ENCODE measurements at regions of chr2 and their contacts with region 1.

Region 1: GRCh38 chr2:198296665-198297308 is 492.4 kb downstream of the PLCL1 start:
- DNase-seq: peak; percentile 31 to 76 (median 43)
- H3K4me3 ChIP-seq: no peak overlapping the region
- H3K27ac ChIP-seq: no peak overlapping the region
- H3K4me1 ChIP-seq: no peaks in the 10 kb centered on the region
- H3K27me3 ChIP-seq: peaks cover 5% of the 10 kb centered on the region
- CTCF ChIP-seq: peak; percentile 67 to 86 (median 78)
- POLR2A ChIP-seq: no peak

Region 2: DNA sequence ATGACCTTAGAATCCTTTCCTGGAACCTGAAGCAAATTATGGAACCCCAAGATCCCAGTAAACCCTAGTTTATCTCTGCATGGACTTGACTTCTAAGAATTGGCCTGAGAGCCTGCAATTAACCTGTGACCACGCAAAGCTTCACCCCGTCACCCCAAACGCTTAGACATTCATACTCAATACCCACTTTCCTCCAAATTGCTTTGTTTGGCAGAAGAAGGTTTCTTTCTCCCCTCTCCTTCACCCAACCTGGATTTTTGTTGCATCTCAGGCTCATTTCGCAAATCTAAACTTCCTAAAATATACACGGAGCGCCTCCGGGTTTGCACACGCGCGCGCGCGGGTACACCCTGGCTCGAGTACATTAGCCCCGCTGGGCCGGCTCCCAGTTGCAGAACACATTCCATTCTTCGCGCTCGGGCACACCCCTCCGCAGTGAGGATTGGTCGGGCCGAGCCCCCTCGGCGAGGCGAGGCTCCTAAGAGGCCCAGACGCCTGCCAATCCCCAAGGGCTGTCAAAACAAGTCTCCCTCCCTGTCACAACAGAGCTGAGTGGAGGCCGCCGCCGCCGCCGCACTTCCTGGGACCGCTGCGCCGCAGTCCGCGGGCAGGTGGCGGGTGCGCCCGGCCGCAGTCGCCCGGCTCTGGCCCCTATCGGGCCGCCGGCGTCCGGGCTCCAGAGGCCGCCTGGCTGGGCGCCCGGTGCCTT is 492.6 kb before region 1 on chr2 and contains the start of gene PLCL1:
- intact Hi-C with region 1: loop called (anchors 5 kb)
- DNase-seq: peak; percentile 92 to 97 (median 95)
- H3K4me3 ChIP-seq: peak within 1 kb of the TSS; percentile 28 to 85 (median 84)
- H3K27ac ChIP-seq: peak within 1 kb of the TSS in 3 of 5 donors; percentile 63 to 78 (median 69)
- H3K4me1 ChIP-seq: peaks cover 10 to 27% of the 10 kb centered on the region in 2 donors
- H3K27me3 ChIP-seq: no peaks in the 10 kb centered on the region
- CTCF ChIP-seq: peak in 3 of 6 experiments; percentile 8 to 34 (median 16)
- POLR2A ChIP-seq: peak in 1 of 2 donors; percentile 77
- total RNA-seq, gene PLCL1: 3.3 to 24.0 (median 6.4) TPM

Region 3: DNA sequence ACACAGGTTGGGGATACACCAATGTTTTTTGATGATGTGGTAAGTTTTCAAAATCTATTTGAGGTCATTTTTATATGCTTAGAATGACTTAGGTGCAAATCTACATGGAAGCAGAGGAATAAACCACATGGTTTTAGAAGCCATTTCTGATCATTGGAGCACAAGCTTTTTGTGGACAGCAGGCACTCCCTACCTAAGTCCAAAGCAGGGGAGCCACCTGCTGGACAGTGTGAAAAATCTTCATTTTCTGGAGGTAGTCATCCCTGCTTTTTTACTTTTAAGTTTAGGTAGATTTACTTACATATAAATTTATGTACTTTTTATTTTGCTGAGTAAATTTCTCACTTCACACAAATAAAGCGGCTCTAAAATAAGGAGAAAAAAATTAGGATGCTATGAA is 169.2 kb before region 1 on chr2:
- intact Hi-C with region 1: loop called (anchors 10 kb)
- DNase-seq: peak in 6 of 7 donors; percentile 40 to 61 (median 55)
- H3K4me3 ChIP-seq: no peak overlapping the region
- H3K27ac ChIP-seq: no peak overlapping the region
- H3K4me1 ChIP-seq: no peaks in the 10 kb centered on the region
- H3K27me3 ChIP-seq: no peaks in the 10 kb centered on the region
- CTCF ChIP-seq: peak; percentile 63 to 77 (median 74)
- POLR2A ChIP-seq: no peak

Region 4: GRCh38 chr2:198135481-198135934 is 161.3 kb before region 1 on chr2:
- intact Hi-C with region 1: loop called in 1 of 2 experiments (anchors 10 kb)
- DNase-seq: no peak
- H3K4me3 ChIP-seq: no peak overlapping the region
- H3K27ac ChIP-seq: no peak overlapping the region
- H3K4me1 ChIP-seq: peaks cover 0 to 10% of the 10 kb centered on the region in 2 donors
- H3K27me3 ChIP-seq: no peaks in the 10 kb centered on the region
- CTCF ChIP-seq: no peak
- POLR2A ChIP-seq: no peak

Measured in adrenal gland (tissue), 19 donors.